Esophagus muscularis mucosa (tissue), 4 donors: ENCODE measurements at regions of chr10 and their contacts with region 1.

Region 1: DNA sequence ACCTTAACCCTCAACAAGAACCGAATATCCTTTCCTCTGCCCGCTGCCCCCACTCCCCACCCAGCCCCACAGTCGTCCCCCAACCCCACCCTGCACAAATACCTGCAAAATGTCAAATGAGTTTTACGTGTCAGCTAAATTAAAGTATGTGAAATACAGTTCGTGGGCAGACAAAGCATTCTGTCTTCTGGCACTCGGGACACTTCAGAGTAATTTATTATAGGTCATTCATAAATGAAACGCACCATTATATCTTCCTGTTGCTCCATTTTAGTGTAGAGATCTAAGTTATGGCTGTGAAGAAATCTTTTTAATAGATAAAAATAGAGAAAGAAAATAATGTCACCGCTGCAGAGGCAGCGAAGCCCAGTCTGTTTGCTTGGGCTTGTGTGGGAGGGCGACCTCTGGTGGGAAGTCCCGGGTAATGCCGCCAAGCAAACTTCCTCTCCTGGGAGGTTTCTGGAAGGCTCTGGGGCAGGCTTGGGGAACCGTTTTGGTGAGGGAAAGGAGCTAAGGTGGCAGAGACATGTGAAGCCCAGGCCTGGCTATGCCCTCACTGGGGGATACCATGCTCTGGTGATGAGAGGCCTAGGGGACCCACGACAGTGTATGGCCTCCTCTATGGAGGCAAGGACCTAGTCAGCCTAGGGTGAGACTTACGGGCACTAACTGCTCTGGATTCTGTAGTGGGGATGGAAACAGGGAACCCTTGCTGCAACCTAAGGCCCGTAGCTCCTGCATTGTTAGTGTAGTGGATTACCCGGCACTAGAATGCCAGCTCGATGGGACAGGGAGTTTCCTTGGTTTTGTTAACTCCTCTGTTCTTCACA is 604.9 kb downstream of the LRMDA start:
- DNase-seq: peak; percentile 94
- H3K4me3 ChIP-seq: peak overlapping the region; percentile 25 to 48 (median 32)
- H3K27ac ChIP-seq: peak overlapping the region; percentile 40 to 74 (median 64)
- H3K4me1 ChIP-seq: peaks cover 6 to 42% (median 40%) of the 10 kb centered on the region in 4 donors
- H3K27me3 ChIP-seq: no peaks in the 10 kb centered on the region
- CTCF ChIP-seq: peak; percentile 97 to 99 (median 98)
- EP300 ChIP-seq: no peak
- POLR2A ChIP-seq: no peak

Region 2: GRCh38 chr10:75772153-75772887 is 264.0 kb before region 1 on chr10:
- intact Hi-C with region 1: loop called (anchors 10 kb)
- DNase-seq: no peak
- H3K4me3 ChIP-seq: peak overlapping the region; percentile 6 to 43 (median 21)
- H3K27ac ChIP-seq: peak overlapping the region; percentile 56 to 74 (median 58)
- H3K4me1 ChIP-seq: peaks cover 5 to 65% (median 53%) of the 10 kb centered on the region in 4 donors
- H3K27me3 ChIP-seq: no peaks in the 10 kb centered on the region
- CTCF ChIP-seq: no peak
- EP300 ChIP-seq: no peak
- POLR2A ChIP-seq: no peak

Region 3: GRCh38 chr10:75922435-75922834 is 113.9 kb before region 1 on chr10:
- intact Hi-C with region 1: loop called (anchors 10 kb)
- DNase-seq: no peak
- H3K4me3 ChIP-seq: no peak overlapping the region
- H3K27ac ChIP-seq: no peak overlapping the region
- H3K4me1 ChIP-seq: peaks cover 0 to 7% (median 0%) of the 10 kb centered on the region in 4 donors
- H3K27me3 ChIP-seq: no peaks in the 10 kb centered on the region
- CTCF ChIP-seq: peak in 1 of 3 experiments; percentile 23
- EP300 ChIP-seq: no peak
- POLR2A ChIP-seq: no peak

Region 4: DNA sequence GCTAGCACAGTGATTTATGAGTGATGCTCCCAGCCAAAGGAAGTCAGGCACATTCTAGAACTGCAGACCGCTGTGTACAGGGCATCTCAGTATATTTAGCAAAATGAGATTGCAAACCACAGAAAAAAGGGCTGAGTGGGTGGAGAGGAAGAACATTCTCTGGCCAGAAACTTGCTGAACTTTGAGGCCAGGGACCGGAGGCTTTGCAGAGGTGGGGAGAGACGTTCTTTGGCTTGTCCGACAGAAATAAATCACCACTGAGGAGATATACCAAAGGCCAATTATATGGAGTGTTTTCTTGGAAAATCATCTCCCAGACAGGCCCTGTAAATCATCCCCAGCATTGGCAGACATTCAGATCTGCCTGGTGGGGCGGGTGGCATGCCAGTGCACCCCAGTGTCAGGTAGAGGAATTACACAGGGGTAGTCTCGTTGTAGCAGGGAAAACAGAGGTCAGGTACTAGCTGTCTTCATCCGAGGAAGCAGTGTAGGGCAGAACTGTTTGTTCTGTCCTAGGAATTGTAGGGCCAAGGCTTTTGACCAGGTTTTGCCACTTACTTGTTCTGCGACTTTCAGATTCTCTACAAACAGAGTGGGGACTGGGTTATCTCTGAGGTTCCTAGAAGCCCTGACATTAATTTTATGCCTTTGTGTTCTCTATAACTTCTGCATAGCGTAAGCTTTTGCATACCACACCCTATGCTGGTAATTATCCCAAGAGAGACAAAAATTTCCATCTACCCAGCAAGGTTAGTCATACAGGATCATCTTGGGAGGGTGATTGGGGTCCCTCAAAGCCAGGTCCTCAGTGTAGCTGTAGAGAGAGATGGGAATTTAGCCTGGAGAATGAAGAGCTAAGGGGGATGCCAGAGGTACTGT is 50.7 kb after region 1 on chr10:
- intact Hi-C with region 1: loop called (anchors 5 kb)
- DNase-seq: no peak
- H3K4me3 ChIP-seq: no peak overlapping the region
- H3K27ac ChIP-seq: peak overlapping the region; percentile 53 to 65 (median 62)
- H3K4me1 ChIP-seq: peaks cover 0 to 31% (median 29%) of the 10 kb centered on the region in 4 donors
- H3K27me3 ChIP-seq: no peaks in the 10 kb centered on the region
- CTCF ChIP-seq: peak; percentile 52 to 82 (median 72)
- EP300 ChIP-seq: no peak
- POLR2A ChIP-seq: no peak

Region 5: DNA sequence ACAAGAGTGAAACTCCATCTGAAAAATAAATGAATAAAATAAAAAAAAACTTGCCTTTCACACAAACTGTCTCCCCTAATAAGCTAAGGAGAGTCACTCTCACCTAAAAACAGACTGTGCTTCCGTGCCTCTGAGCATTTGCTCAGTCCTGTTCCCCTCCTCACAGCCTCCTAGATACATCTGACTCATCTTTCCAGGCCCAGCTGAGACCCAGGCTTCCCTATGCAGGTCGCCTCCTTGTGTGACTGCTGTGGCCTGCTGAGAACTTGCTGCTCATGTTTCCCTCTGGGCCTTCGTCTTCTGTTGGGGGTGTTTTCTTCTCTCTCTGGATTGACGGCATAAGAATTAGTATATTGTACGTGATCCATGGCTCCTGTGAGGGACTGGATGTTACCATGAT is 172.8 kb after region 1 on chr10:
- intact Hi-C with region 1: no loop called
- DNase-seq: no peak
- H3K4me3 ChIP-seq: no peak overlapping the region
- H3K27ac ChIP-seq: no peak overlapping the region
- H3K4me1 ChIP-seq: no peaks in the 10 kb centered on the region
- H3K27me3 ChIP-seq: no peaks in the 10 kb centered on the region
- CTCF ChIP-seq: no peak
- EP300 ChIP-seq: no peak
- POLR2A ChIP-seq: no peak

Region 6: DNA sequence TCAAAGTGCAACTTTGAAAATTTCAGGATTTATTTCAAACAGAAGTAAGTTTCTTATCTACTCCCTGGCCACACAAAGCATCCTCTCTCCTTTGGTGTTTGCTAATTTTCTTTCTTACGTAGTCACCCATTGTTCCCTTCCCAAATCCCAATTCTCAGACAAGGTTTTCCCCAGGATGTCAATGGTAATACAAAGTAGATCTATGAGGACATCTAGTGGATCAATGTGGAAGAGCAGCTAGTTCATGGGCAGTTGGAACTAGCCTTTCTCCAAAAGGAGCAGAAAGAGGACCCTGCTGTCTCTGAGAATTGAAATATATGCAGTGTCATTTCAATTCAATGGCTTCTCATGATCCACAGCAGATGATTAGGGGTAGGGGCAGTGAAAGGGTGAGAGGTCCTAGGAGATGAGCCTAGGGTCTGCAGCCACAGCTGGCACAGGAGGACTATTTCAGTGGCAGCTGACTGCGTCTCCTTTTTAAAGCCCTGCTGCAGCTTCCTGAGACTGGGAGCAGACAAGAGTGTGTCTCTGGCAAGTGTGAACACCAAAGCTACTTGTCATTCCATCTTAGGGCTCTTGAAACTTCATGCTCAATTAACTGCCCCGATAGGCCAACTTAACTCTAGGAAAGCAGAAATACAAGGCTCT is 968.7 kb after region 1 on chr10:
- intact Hi-C with region 1: loop called (anchors 10 kb)
- DNase-seq: no peak
- H3K4me3 ChIP-seq: no peak overlapping the region
- H3K27ac ChIP-seq: peak overlapping the region in 2 of 4 donors; percentile 14 to 24
- H3K4me1 ChIP-seq: peaks cover 0 to 17% (median 9%) of the 10 kb centered on the region in 4 donors
- H3K27me3 ChIP-seq: no peaks in the 10 kb centered on the region
- CTCF ChIP-seq: peak; percentile 72 to 86 (median 76)
- EP300 ChIP-seq: no peak
- POLR2A ChIP-seq: no peak